Motor neuron (in vitro differentiated cells): ENCODE measurements at regions of chr13 and their contacts with region 1.

Region 1: DNA sequence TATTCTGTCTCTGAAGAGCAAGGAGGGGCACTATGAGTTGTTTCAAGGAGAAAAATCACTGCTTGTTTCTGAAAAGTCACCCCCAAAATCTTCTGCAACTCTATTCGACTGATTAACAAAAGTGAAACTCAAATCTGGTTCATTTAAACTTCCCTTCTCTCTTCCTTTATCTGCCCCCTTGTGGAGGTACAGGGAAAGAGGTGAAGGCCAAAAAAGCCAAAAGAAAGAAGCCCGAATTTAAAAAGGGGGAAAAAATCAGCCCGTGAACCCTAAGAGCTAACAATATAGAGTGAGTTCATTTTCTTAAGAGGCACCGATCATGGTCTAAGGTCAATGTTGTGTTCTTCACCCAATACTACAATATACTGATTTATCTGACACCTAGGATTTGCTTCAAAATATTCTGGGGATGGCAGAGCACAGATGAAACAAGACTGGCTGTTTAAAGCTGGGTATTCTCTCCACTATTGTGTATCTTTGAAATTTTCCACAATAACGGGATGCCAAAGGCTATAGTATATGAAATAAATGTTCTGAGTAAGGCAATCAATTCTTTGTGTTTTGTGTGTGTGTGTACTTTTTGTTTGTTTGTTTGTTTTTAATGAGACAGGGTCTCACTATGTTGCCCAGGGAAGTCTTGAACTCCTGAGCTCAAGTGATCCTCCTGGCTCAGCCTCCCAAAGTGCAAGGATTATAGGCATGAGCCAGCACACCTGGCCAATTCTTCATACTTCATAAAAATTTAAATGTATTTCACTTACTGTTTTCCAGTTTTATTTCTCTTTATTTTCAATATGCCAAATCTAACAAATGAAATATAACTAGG is 55.0 kb upstream of the EEF1AKMT1 start:
- ATAC-seq: peak in 3 of 8 experiments; percentile 53 to 61 (median 56)
- H3K4me3 ChIP-seq: no peak overlapping the region
- H3K27ac ChIP-seq: no peak overlapping the region
- H3K4me1 ChIP-seq: no peaks in the 10 kb centered on the region

Region 2: GRCh38 chr13:20505405-20506366 is 323.1 kb before region 1 on chr13:
- in situ Hi-C with region 1: loop called in 1 of 9 experiments (anchors 10 kb)
- ATAC-seq: no peak
- H3K4me3 ChIP-seq: no peak overlapping the region
- H3K27ac ChIP-seq: no peak overlapping the region
- H3K4me1 ChIP-seq: no peaks in the 10 kb centered on the region

Region 3: GRCh38 chr13:20703780-20704445 is 124.8 kb before region 1 on chr13:
- in situ Hi-C with region 1: loop called in 1 of 9 experiments (anchors 25 kb)
- ATAC-seq: peak; percentile 83 to 94 (median 88)
- H3K4me3 ChIP-seq: peak overlapping the region; percentile 58 to 96 (median 64)
- H3K27ac ChIP-seq: peak overlapping the region; percentile 73 to 76
- H3K4me1 ChIP-seq: peaks cover 12 to 13% of the 10 kb centered on the region in 2 donors

Region 4: DNA sequence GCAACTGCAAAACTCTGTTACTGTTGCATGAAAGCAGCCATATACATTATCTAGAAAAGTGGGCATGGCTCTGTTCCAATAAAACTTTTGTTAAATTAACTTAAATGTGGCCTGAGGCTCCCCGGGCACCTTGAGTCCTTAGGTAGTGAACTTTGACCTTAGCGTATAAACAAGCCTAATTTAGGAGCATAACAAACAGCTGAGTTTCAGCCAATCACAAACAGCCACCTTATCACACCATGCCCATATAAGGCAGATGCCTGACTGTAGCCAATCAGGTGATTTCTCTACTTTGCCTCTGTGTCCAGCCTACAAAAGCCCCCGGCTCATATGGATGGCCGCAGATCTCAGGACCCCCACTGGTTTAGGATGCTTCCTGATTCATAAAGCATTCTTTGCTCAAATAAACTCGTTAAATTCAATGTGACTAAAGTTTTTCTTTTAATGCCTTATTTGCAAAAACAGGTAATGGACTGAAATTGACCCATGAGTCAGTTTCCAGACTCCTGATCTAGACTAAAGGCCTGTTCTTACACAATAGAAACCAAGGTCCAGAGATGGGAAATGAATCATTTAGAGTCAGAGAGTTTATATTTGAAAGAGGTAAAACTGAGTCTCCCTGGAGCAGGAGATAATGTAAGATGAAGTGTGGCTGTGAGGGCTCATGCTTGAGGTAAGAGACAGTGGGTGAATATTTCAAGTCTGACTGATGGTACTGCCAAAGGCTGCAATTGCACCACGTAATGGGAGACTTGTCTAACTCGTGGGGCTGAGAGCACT is 972.3 kb after region 1 on chr13:
- in situ Hi-C with region 1: no loop called
- ATAC-seq: no peak
- H3K4me3 ChIP-seq: no peak overlapping the region
- H3K27ac ChIP-seq: no peak overlapping the region
- H3K4me1 ChIP-seq: peaks cover 12 to 31% of the 10 kb centered on the region in 2 donors